ENCODE measurements at regions of chr1 and their contacts with region 1.

Region 1: DNA sequence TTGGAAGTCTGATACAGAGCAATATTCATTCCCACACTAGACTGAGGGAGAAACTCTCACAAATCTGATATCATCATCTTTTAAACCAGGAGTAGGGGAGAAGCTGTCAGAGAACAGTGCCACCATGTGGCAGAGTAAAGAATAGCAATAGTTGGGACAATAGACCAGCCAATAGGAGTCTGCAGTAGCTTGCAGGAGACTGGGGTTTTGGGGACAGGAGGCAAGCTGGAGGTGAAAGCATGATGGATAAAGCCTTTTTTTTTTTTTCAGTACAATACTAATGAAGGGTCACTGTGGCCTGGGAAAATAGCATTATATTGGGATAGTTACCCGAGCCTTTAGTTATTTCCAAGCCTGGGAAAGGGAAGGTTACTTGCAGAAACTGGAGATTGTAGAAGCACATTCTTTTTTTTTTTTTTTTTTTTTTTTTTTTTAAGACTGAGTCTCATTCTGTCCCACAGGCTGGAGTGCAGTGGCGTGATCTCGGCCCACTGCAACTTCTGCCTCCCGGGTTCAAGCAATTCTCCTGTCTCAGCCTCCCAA is 120.7 kb downstream of the S1PR1 start:
- DNase-seq: peak; percentile 72
- ATAC-seq: peak; percentile 99
- H3K4me3 Mint-ChIP-seq: no peak overlapping the region
- H3K27ac Mint-ChIP-seq: no peak overlapping the region
- H3K4me1 Mint-ChIP-seq: peaks cover 10% of the 10 kb centered on the region
- H3K27me3 Mint-ChIP-seq: no peaks in the 10 kb centered on the region
- CTCF ChIP-seq: peak; percentile 92

Region 2: GRCh38 chr1:101136739-101137138 is 220.8 kb before region 1 on chr1:
- CTCF ChIA-PET with region 1: interaction called, 5 read pairs
- POLR2A ChIA-PET with region 1: no interaction called
- intact Hi-C with region 1: loop called (anchors 10 kb)
- DNase-seq: peak; percentile 59
- ATAC-seq: peak; percentile 85
- H3K4me3 Mint-ChIP-seq: peak overlapping the region; percentile 33
- H3K27ac Mint-ChIP-seq: peak overlapping the region; percentile 80
- H3K4me1 Mint-ChIP-seq: peaks cover 64% of the 10 kb centered on the region
- H3K27me3 Mint-ChIP-seq: no peaks in the 10 kb centered on the region
- CTCF ChIP-seq: peak; percentile 56

Region 3: GRCh38 chr1:101288491-101288944 is 69.0 kb before region 1 on chr1:
- CTCF ChIA-PET with region 1: interaction called, 15 read pairs
- POLR2A ChIA-PET with region 1: no interaction called
- intact Hi-C with region 1: no loop called
- DNase-seq: peak; percentile 79
- ATAC-seq: peak; percentile 25
- H3K4me3 Mint-ChIP-seq: no peak overlapping the region
- H3K27ac Mint-ChIP-seq: peak overlapping the region; percentile 43
- H3K4me1 Mint-ChIP-seq: peaks cover 83% of the 10 kb centered on the region
- H3K27me3 Mint-ChIP-seq: no peaks in the 10 kb centered on the region
- CTCF ChIP-seq: peak; percentile 88

Region 4: DNA sequence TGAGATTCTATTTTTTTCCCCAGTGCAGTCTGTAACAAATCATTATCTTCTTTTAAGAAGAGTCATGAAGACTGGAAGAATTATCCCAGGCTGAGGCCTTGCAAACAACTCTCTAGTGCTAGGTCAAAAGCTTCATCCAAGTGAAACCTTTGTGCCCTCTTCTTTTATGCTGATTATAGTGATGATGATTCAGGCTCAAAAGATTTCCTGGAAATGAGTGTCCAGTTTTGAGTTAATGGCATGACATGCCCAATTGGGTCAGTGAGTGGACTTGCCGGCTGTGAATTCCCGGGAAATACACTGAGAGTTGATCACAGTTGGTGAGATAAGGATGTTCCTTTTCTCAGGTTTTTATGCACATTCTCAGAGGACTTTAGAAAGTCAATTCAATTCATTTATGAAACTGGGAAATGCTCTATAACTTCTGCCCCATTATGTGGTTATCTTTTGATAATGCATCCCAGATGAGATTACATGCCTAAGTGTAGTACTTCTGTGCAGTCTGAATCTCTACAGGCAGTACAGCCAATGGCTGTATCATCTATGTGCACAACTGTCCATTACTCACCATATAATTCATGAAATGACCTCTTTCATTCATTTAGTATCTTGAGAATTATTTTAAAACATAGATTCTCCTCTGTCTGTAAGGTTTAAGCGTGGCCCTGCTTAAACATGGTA is 54.5 kb before region 1 on chr1:
- CTCF ChIA-PET with region 1: interaction called, 153 read pairs
- POLR2A ChIA-PET with region 1: interaction called, 3 read pairs
- intact Hi-C with region 1: no loop called
- DNase-seq: no peak
- ATAC-seq: no peak
- H3K4me3 Mint-ChIP-seq: no peak overlapping the region
- H3K27ac Mint-ChIP-seq: no peak overlapping the region
- H3K4me1 Mint-ChIP-seq: peaks cover 19% of the 10 kb centered on the region
- H3K27me3 Mint-ChIP-seq: no peaks in the 10 kb centered on the region
- CTCF ChIP-seq: no peak

Region 5: DNA sequence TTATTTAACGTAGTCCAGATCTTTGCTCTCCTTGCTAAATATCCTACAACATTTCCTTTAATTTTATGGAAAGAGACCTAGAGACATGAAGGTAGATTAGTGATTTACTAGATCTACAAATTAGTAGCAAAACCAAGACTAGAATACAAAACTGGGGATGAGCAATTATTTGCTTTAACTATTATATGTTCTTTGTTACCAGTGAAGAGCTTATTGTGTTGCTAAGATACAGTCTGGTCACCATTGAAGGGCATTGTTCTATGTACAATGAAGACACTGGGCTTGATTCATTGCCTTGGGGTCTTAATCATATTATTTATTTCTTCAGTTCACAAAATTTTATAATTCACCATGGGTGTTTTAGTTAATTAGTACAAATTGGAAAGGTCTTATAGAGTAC is 32.4 kb before region 1 on chr1:
- CTCF ChIA-PET with region 1: interaction called, 15 read pairs
- POLR2A ChIA-PET with region 1: interaction called, 3 read pairs
- intact Hi-C with region 1: no loop called
- DNase-seq: no peak
- ATAC-seq: no peak
- H3K4me3 Mint-ChIP-seq: no peak overlapping the region
- H3K27ac Mint-ChIP-seq: no peak overlapping the region
- H3K4me1 Mint-ChIP-seq: no peaks in the 10 kb centered on the region
- H3K27me3 Mint-ChIP-seq: peaks cover 2% of the 10 kb centered on the region
- CTCF ChIP-seq: no peak

Region 6: GRCh38 chr1:101344745-101345144 is 12.8 kb before region 1 on chr1:
- CTCF ChIA-PET with region 1: interaction called, 14 read pairs
- POLR2A ChIA-PET with region 1: no interaction called
- intact Hi-C with region 1: no loop called
- DNase-seq: no peak
- ATAC-seq: no peak
- H3K4me3 Mint-ChIP-seq: no peak overlapping the region
- H3K27ac Mint-ChIP-seq: no peak overlapping the region
- H3K4me1 Mint-ChIP-seq: peaks cover 31% of the 10 kb centered on the region
- H3K27me3 Mint-ChIP-seq: no peaks in the 10 kb centered on the region
- CTCF ChIP-seq: no peak

Region 7: GRCh38 chr1:101376121-101377083 is 18.9 kb after region 1 on chr1:
- CTCF ChIA-PET with region 1: interaction called, 24 read pairs
- POLR2A ChIA-PET with region 1: no interaction called
- intact Hi-C with region 1: no loop called
- DNase-seq: no peak
- ATAC-seq: no peak
- H3K4me3 Mint-ChIP-seq: no peak overlapping the region
- H3K27ac Mint-ChIP-seq: no peak overlapping the region
- H3K4me1 Mint-ChIP-seq: peaks cover 16% of the 10 kb centered on the region
- H3K27me3 Mint-ChIP-seq: no peaks in the 10 kb centered on the region
- CTCF ChIP-seq: no peak